Posterior vena cava (tissue), 2 donors: ENCODE measurements at regions of chr9 and their contacts with region 1.

Region 1: GRCh38 chr9:27851858-27852257 is 278.6 kb upstream of the C9orf72 start:
- DNase-seq: no peak

Region 2: GRCh38 chr9:27835286-27835685 is 16.6 kb before region 1 on chr9:
- intact Hi-C with region 1: loop called in 1 of 2 experiments (anchors 1 kb)
- DNase-seq: no peak